ENCODE measurements at regions of chr10 and their contacts with region 1.

Region 1: DNA sequence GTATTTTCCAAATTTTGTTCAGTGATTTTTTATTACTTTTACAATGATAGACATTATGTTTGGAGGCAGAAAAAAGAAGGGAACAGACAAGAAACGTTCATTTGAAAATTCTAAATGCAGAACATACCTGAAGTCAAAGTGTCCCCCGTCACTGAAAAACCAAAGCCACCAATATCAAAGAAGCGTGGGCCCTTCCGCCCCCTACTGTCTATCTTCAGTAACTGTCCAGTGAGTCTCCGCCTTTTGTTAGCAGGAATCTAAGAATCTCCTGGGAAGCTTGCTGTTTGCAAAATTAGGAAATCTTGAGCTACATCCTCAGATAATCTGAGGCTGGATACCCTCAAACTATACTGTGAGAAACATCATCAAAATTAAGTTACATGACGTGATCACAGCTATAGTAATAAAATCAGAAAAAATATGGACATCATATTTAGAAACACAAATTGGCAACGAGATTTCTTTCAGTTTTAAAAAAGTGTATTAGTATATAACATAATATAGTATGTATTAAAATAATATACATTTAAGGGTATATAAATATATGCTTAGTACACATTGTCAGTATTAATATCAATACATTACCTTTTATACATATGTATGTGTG is 169.3 kb upstream of the AKR1E2 start:
- DNase-seq: peak; percentile 52
- ATAC-seq: no peak
- H3K4me3 Mint-ChIP-seq: no peak overlapping the region
- H3K27ac Mint-ChIP-seq: no peak overlapping the region
- H3K4me1 Mint-ChIP-seq: peaks cover 16% of the 10 kb centered on the region
- H3K27me3 Mint-ChIP-seq: peaks cover 15% of the 10 kb centered on the region
- CTCF ChIP-seq: peak; percentile 92

Region 2: GRCh38 chr10:3239066-3239919 is 1417.4 kb before region 1 on chr10:
- CTCF ChIA-PET with region 1: interaction called, 6 read pairs
- POLR2A ChIA-PET with region 1: no interaction called
- intact Hi-C with region 1: loop called (anchors 10 kb)
- DNase-seq: peak; percentile 81
- ATAC-seq: peak; percentile 92
- H3K4me3 Mint-ChIP-seq: no peak overlapping the region
- H3K27ac Mint-ChIP-seq: no peak overlapping the region
- H3K4me1 Mint-ChIP-seq: peaks cover 3% of the 10 kb centered on the region
- H3K27me3 Mint-ChIP-seq: peaks cover 34% of the 10 kb centered on the region
- CTCF ChIP-seq: peak; percentile 91

Measured in activated CD8-positive, alpha-beta T cell treated with anti-CD3 and anti-CD28 coated beads for 36 hours (primary cell).